Posterior vena cava (tissue), 2 donors: ENCODE measurements at regions of chr12 and their contacts with region 1.

Region 1: DNA sequence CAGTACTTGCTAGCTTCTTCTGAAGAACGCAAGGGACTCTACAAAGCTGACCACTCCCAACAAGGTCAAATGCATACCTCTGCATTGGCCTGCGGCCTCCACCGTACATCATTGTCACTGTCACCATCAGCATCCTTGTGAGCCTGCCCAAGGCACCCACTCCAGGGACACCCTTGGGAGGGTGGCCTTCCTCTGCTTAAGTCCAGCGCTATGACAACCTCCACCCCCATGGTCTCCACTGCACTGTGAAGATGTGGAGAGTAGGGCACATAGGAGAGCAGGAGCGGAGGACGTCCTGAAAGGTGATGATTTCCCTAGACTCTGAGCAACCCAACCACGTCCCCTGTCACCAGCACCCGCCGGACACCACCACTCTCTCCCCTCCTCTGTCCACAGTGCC is 252.8 kb downstream of the ALG10 start:
- DNase-seq: no peak

Region 2: GRCh38 chr12:33609521-33610309 is 665.4 kb before region 1 on chr12:
- intact Hi-C with region 1: loop called in 1 of 2 experiments (anchors 10 kb)
- DNase-seq: no peak

Region 3: DNA sequence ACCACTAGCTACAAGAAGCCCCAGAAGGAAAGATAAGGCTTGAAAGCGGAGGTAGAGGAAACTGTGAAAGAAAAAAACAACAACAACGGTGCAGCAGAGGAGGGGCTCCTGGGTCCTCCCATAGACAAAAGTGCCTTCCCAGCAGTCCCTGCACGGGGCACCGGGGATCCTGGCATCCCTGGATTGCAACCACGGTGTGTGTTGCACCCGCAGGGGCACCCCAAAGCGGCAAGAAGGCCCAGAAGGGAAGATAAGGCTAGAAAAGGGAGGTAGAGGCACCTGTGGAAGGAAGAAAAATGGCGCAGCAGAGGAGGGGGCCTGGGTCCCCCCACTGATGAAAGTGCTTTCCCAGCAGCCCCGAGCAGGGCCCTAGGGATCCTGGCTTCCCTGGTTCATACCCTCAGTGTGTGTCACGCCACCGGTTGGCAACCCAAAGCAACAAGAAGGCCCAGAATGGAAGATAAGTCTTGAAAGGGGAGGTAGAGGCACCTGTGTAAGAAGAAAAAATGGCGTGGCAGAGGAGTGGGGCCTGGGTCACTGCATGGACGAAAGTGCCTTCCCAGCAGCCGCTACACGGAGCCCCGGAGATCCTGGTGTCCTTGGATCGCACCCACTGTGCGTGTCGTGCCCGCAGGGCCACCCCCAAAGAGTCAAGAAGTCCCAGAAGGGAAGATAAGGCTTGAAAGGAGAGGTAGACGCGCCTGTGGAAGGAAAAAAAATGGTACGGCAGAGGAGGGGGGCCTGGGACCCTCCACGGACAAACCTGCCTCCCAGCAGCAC is 28.2 kb after region 1 on chr12:
- intact Hi-C with region 1: loop called in 1 of 2 experiments (anchors 1 kb)
- DNase-seq: peak; percentile 53